Right cardiac atrium (tissue), 5 donors: ENCODE measurements at regions of chr19 and their contacts with region 1.

Region 1: GRCh38 chr19:33373701-33374421 is at the start of gene CEBPG:
- DNase-seq: peak; percentile 70 to 86 (median 83)
- ATAC-seq: peak; percentile 26 to 40
- H3K4me3 ChIP-seq: peak within 1 kb of the TSS; percentile 89
- H3K27ac ChIP-seq: peak within 1 kb of the TSS; percentile 99
- H3K4me1 ChIP-seq: peaks cover 6% of the 10 kb centered on the region
- H3K27me3 ChIP-seq: no peaks in the 10 kb centered on the region
- total RNA-seq, gene CEBPG: 13.1 to 18.3 (median 15.7) TPM

Region 2: DNA sequence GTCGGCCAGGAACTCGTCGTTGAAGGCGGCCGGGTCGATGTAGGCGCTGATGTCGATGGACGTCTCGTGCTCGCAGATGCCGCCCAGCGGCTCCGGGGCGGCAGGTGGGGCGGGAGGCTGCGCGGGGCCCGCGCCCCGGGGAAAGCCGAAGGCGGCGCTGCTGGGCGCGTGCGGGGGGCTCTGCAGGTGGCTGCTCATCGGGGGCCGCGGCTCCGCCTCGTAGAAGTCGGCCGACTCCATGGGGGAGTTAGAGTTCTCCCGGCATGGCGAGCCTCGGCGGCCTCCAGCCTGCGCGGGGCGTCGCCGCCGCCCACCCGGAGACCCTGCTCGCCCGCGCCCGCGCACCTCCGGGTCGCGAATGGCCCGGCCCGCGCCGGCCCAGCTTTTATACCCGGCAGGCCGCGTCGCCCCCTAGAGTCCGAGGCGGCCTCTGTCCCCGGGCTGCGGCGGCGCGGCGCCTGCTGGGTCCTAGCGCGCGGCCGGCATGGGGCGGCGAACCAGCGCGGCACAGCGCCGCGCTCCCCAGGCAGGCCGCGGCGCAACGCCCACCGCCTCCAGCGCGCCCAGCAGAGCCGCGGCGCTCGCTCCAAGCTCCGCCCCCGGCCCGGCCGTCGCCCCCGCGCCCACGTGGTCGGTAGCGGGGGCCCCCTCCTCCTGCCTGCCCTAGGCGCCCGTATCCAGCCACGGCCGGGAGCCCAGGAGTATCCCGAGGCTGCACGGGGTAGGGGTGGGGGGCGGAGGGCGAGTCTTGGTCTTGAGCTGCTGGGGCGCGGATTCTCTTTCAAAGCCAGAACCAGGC is 71.5 kb before region 1 on chr19 and contains the start of gene CEBPA:
- intact Hi-C with region 1: loop called in 1 of 4 experiments (anchors 10 kb)
- DNase-seq: peak; percentile 84 to 94 (median 92)
- ATAC-seq: peak; percentile 92
- H3K4me3 ChIP-seq: peak within 1 kb of the TSS; percentile 71
- H3K27ac ChIP-seq: peak within 1 kb of the TSS; percentile 5
- H3K4me1 ChIP-seq: no peaks in the 10 kb centered on the region
- H3K27me3 ChIP-seq: no peaks in the 10 kb centered on the region
- total RNA-seq, gene CEBPA: 2.1 to 5.2 (median 3.3) TPM